Caco-2 (cell line): ENCODE measurements at regions of chr7 and their contacts with region 1.

Region 1: DNA sequence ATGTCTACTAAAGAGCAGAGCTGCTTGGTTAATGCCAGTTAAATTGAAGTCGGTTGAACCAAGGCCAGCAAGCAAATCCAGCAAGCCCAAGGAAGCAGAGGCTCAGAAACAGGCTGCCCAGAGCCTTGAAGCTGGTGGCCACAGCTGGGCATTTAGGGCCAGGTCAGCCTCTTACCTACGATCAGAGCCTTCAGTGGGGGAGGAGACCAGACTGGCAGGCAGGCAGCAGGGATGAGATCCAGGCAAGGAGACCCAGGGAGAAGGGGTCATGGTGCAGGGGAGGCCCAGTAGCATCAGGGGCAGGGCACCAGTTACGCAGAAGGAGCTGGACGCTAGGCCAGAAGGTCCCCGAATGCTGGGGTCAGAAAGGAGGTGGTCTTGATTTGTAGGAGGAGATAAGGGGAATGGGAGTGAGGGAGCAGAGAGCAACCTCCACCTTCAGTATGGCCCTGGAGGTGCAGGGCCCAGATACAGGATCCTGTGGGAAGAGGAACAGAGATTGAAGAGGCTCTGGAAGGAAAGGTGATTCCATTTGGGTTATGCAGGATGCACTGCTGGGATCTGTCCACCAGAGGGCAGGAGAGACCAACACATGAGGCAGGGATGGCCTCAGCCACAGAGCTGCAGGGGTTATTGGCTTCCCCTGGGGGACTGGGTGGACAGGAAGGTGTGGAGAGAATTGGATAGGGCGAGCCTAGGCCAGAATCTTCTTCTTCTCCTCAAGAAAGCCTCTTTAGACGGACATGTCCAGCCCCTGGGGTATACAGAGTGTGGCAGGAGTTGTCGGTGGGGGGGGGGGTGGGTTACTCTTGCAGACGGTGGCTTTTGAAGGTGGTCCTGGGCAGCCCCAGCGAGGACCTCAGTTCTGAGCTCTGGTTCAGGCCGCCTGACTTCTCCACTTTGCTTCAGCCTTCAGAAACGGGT is 132.6 kb upstream of the PODXL start:
- DNase-seq: peak; percentile 78 to 85
- H3K4me3 ChIP-seq: no peak overlapping the region
- H3K4me3 Mint-ChIP-seq: no peak overlapping the region
- H3K27ac Mint-ChIP-seq: no peak overlapping the region
- H3K4me1 ChIP-seq: no peaks in the 10 kb centered on the region
- H3K4me1 Mint-ChIP-seq: no peaks in the 10 kb centered on the region
- H3K27me3 ChIP-seq: no peaks in the 10 kb centered on the region
- H3K27me3 Mint-ChIP-seq: no peaks in the 10 kb centered on the region
- CTCF ChIP-seq: peak; percentile 95 to 97

Region 2: GRCh38 chr7:131454538-131454937 is 234.5 kb before region 1 on chr7:
- CTCF ChIA-PET with region 1: no interaction called
- POLR2A ChIA-PET with region 1: no interaction called
- intact Hi-C with region 1: no loop called
- DNase-seq: no peak
- H3K4me3 ChIP-seq: no peak overlapping the region
- H3K4me3 Mint-ChIP-seq: no peak overlapping the region
- H3K27ac Mint-ChIP-seq: no peak overlapping the region
- H3K4me1 ChIP-seq: no peaks in the 10 kb centered on the region
- H3K4me1 Mint-ChIP-seq: peaks cover 6% of the 10 kb centered on the region
- H3K27me3 ChIP-seq: no peaks in the 10 kb centered on the region
- H3K27me3 Mint-ChIP-seq: no peaks in the 10 kb centered on the region
- CTCF ChIP-seq: no peak

Region 3: GRCh38 chr7:131604841-131605279 is 84.1 kb before region 1 on chr7:
- CTCF ChIA-PET with region 1: no interaction called
- POLR2A ChIA-PET with region 1: no interaction called
- intact Hi-C with region 1: no loop called
- DNase-seq: no peak
- H3K4me3 ChIP-seq: no peak overlapping the region
- H3K4me3 Mint-ChIP-seq: no peak overlapping the region
- H3K27ac Mint-ChIP-seq: peak overlapping the region; percentile 81
- H3K4me1 ChIP-seq: peaks cover 97% of the 10 kb centered on the region
- H3K4me1 Mint-ChIP-seq: peaks cover 68% of the 10 kb centered on the region
- H3K27me3 ChIP-seq: no peaks in the 10 kb centered on the region
- H3K27me3 Mint-ChIP-seq: no peaks in the 10 kb centered on the region
- CTCF ChIP-seq: no peak

Region 4: DNA sequence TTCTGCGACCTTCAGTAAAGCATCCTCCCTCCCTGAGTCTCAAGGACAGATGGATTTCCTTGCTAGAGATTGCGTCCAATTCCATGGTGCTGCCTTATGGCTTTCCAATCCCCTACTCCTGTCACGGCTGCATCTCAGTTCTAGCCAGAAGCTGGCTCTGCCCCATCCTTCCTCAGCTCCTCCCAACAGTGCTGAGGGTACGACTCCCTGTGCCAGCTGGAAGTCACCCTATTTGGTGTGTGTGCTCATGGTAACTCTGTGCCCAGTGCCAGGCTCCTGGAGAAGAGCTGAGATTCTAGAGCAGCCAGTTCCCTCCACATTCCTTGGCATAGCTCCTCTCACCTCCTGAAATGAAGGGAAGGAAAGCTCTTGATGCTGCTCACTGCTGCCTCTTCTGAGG is 52.4 kb after region 1 on chr7:
- CTCF ChIA-PET with region 1: no interaction called
- POLR2A ChIA-PET with region 1: no interaction called
- intact Hi-C with region 1: loop called (anchors 5 kb)
- DNase-seq: no peak
- H3K4me3 ChIP-seq: no peak overlapping the region
- H3K4me3 Mint-ChIP-seq: no peak overlapping the region
- H3K27ac Mint-ChIP-seq: no peak overlapping the region
- H3K4me1 ChIP-seq: no peaks in the 10 kb centered on the region
- H3K4me1 Mint-ChIP-seq: no peaks in the 10 kb centered on the region
- H3K27me3 ChIP-seq: no peaks in the 10 kb centered on the region
- H3K27me3 Mint-ChIP-seq: peaks cover 17% of the 10 kb centered on the region
- CTCF ChIP-seq: no peak

Region 5: DNA sequence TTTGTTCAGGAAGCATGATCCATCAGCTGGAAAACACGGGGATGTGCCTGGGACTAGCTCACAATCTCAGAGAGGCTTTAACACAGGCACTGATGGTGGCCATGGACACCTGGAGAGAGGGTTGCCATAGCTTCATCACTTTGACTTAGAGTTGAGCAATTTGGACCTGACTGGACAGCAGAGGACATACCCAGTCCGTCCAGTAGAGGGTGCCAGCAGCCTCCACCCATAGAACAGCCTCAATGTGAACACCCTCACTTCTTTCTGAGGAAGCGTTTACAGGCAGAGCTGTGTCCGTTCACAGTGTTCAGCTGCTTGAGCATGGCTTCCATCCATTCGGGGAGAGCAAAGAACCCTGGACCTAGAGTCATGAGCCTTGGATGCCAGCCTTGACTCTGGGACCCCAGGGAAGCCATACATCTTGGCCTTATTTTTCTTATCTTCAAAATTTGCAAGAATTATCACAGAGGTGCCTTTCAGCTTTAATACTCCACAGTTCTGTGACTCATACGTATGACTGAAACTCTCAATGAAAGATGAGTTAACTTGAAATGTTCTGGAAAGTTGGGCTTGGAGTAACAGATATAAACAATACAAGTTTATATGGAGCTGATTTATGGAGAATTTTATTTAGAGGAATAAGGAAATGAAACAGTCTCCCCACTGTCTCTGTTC is 170.3 kb after region 1 on chr7:
- CTCF ChIA-PET with region 1: interaction called, 22 read pairs
- POLR2A ChIA-PET with region 1: no interaction called
- intact Hi-C with region 1: loop called (anchors 2 kb)
- DNase-seq: peak; percentile 65 to 72
- H3K4me3 ChIP-seq: no peak overlapping the region
- H3K4me3 Mint-ChIP-seq: no peak overlapping the region
- H3K27ac Mint-ChIP-seq: no peak overlapping the region
- H3K4me1 ChIP-seq: no peaks in the 10 kb centered on the region
- H3K4me1 Mint-ChIP-seq: no peaks in the 10 kb centered on the region
- H3K27me3 ChIP-seq: no peaks in the 10 kb centered on the region
- H3K27me3 Mint-ChIP-seq: peaks cover 5% of the 10 kb centered on the region
- CTCF ChIP-seq: peak; percentile 87 to 89

Region 6: GRCh38 chr7:132049462-132050304 is 360.7 kb after region 1 on chr7:
- CTCF ChIA-PET with region 1: interaction called, 6 read pairs
- POLR2A ChIA-PET with region 1: no interaction called
- intact Hi-C with region 1: loop called (anchors 1 kb)
- DNase-seq: peak in 1 of 2 experiments; percentile 63
- H3K4me3 ChIP-seq: no peak overlapping the region
- H3K4me3 Mint-ChIP-seq: no peak overlapping the region
- H3K27ac Mint-ChIP-seq: no peak overlapping the region
- H3K4me1 ChIP-seq: peaks cover 4% of the 10 kb centered on the region; the same call in 1 of the 2 replicates
- H3K4me1 Mint-ChIP-seq: no peaks in the 10 kb centered on the region
- H3K27me3 ChIP-seq: no peaks in the 10 kb centered on the region
- H3K27me3 Mint-ChIP-seq: peaks cover 15% of the 10 kb centered on the region
- CTCF ChIP-seq: peak; percentile 68 to 81